ENCODE measurements at regions of chr3 and their contacts with region 1.

Region 1: DNA sequence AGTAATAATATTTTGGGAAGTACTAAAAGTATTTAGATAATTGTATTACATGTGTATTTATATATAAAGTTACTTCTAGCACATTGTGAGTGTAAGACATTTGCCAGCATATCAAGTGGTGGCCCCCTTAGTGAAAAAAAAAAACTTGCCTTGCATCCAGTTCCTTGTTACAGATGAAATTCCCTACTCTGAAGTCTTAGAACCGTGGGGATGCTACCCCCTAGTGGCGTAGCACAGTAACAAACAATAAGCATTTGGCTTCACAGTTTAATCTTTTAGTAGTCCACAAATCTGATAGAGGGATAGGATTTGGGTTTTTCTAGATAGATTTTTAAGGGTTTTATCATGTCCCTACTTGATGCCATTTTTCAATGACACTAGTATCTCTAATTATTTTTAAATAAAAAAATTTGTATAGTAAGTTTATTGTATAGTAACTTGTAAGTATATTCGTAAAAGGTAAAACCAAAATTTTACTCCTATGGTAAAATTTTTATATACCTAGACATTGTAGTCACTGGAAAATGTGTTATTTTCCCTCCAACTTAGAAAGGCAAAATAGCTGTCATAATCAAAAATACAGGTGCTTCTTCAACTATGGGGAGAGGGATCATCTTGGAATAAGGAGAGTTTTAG is 14.3 kb downstream of the SMC4 start:
- DNase-seq: no peak
- H3K4me3 ChIP-seq: no peak overlapping the region
- CTCF ChIP-seq: peak; percentile 70

Region 2: GRCh38 chr3:160035757-160036156 is 378.0 kb before region 1 on chr3:
- CTCF ChIA-PET with region 1: interaction called, 62 read pairs
- POLR2A ChIA-PET with region 1: no interaction called
- DNase-seq: no peak
- H3K4me3 ChIP-seq: no peak overlapping the region
- CTCF ChIP-seq: no peak

Region 3: DNA sequence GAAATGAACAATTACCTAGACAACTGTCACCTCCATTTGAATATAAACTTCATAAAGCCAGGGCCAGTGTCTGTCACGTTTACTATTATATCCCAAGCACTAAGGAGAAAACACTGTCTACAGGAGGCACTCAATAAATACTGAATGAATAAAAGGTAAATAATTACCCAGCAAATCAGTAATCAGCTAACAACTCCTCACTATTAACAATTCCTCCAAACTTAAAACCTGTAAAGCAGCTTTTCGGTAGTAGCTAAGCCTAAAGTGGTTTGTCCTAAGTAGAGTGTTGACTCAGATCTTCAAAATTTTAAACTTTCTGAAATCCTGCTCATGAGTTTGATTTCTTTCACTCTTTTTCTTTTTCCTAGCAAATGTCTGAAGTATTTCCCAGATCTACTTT is 148.7 kb before region 1 on chr3:
- CTCF ChIA-PET with region 1: no interaction called
- POLR2A ChIA-PET with region 1: no interaction called
- DNase-seq: no peak
- H3K4me3 ChIP-seq: no peak overlapping the region
- CTCF ChIP-seq: no peak

Region 4: DNA sequence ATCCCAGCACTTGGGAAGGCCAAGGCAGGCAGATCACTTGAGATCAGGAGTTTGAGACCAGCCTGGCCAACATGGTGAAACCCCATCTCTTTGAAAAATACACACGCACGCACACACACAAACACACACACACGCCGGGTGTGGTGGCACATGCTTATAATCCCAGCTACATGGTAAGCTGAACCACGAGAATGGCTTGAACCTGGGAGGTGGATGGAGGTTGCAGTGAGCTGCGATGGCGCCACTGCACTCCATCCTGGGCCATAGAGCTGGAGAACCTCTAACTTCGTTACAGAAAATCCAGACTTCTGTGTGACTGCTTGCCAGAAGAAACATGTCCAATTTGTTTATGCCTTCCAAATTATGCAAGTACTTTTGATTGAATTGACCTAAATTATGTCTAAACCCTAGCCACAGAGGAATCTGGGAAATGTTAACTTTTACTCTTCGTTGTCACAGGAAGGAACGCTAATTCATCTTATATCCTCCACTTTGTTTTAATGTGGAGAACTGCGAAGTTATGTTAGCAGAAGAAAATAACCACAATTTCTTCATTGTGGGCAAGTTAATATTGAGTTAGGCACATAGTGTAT is 14.2 kb after region 1 on chr3:
- CTCF ChIA-PET with region 1: interaction called, 33 read pairs
- POLR2A ChIA-PET with region 1: no interaction called
- DNase-seq: no peak
- H3K4me3 ChIP-seq: no peak overlapping the region
- CTCF ChIP-seq: no peak

Region 5: GRCh38 chr3:160444413-160444812 is 30.7 kb after region 1 on chr3:
- CTCF ChIA-PET with region 1: interaction called, 10 read pairs
- POLR2A ChIA-PET with region 1: no interaction called
- DNase-seq: no peak
- H3K4me3 ChIP-seq: no peak overlapping the region
- CTCF ChIP-seq: no peak